ENCODE measurements at regions of chr11 and their contacts with region 1.

Region 1: GRCh38 chr11:64638018-64638665 is 47.1 kb downstream of the SLC22A12 start:
- DNase-seq: no peak
- ATAC-seq: peak in 6 of 8 donors; percentile 12 to 48 (median 30)
- H3K4me3 ChIP-seq: peak overlapping the region in 5 of 10 donors; percentile 13 to 28 (median 20)
- H3K27ac ChIP-seq: no peak overlapping the region
- H3K4me1 ChIP-seq: peaks cover 0 to 11% (median 3%) of the 10 kb centered on the region in 9 donors
- H3K27me3 ChIP-seq: peaks cover 5 to 77% (median 61%) of the 10 kb centered on the region in 7 donors
- CTCF ChIP-seq: no peak

Region 2: GRCh38 chr11:64428693-64429092 is 209.4 kb before region 1 on chr11:
- intact Hi-C with region 1: no loop called
- DNase-seq: no peak
- ATAC-seq: no peak
- H3K4me3 ChIP-seq: no peak overlapping the region
- H3K27ac ChIP-seq: no peak overlapping the region
- H3K4me1 ChIP-seq: no peaks in the 10 kb centered on the region
- H3K27me3 ChIP-seq: peaks cover 0 to 14% (median 6%) of the 10 kb centered on the region in 7 donors
- CTCF ChIP-seq: no peak

Region 3: DNA sequence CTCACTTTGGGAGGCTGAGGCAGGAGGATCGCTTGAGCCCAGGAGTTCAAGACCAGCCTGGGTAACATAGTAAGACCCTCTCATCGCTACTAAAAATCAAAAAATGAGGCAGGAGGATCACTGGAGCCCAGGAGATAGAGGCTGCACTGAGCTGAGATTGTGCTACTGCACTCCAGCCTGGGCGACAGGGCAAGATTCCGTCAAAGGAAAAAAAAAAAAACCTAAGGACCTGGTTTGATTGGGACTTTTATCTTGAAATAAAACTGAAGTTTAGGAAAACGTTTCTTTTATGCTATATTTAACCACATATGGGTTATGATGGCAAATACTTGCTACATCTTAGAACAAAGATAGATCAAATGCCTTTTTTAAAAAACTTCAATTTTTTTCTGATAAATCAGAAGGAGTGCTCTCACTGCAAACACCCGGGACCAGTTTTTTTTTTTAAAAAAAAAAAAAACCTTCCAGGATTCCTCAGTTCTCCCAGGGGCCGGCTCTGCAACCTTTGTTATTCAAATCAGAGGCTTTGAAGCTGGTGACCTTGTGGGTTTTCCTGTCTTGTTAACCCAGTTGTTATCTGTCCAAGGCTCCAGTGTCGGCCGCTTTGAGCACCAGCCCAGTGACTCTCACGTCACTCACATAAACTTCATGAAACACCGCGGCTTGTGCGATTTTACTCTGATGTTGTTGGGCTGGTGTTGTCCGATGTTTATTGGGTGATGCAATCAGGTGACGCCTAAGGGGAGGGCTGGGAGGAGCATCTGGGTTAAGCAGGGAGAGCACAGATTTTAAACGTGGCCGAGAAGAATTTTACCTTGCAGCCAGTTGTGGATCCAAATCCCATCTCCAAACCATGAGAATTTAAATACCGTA is 71.9 kb before region 1 on chr11:
- intact Hi-C with region 1: loop called in 1 of 10 experiments (anchors 10 kb)
- DNase-seq: peak in 1 of 2 donors; percentile 60
- ATAC-seq: peak in 7 of 8 donors; percentile 46 to 87 (median 76)
- H3K4me3 ChIP-seq: peak overlapping the region in 2 of 10 donors; percentile 11 to 22
- H3K27ac ChIP-seq: peak overlapping the region in 1 of 10 donors; percentile 24
- H3K4me1 ChIP-seq: peaks cover 0 to 15% (median 4%) of the 10 kb centered on the region in 9 donors
- H3K27me3 ChIP-seq: peaks cover 0 to 2% (median 0%) of the 10 kb centered on the region in 7 donors
- CTCF ChIP-seq: no peak

Measured in heart right ventricle (tissue), 16 donors.